Activated CD4-positive, alpha-beta T cell treated with anti-CD3 and anti-CD28 coated beads, Interleukin-2, amount 10 ng/mL, durations not matched to agents 24 days and 14 days (primary cell): ENCODE measurements at regions of chr9 and their contacts with region 1.

Region 1: GRCh38 chr9:72526901-72527800 is 5.7 kb downstream of the TMC1 start:
- DNase-seq: peak; percentile 94
- H3K4me3 Mint-ChIP-seq: peak overlapping the region; percentile 73
- H3K27ac Mint-ChIP-seq: peak overlapping the region; percentile 96
- H3K4me1 Mint-ChIP-seq: peaks cover 56% of the 10 kb centered on the region
- H3K27me3 Mint-ChIP-seq: no peaks in the 10 kb centered on the region

Region 2: DNA sequence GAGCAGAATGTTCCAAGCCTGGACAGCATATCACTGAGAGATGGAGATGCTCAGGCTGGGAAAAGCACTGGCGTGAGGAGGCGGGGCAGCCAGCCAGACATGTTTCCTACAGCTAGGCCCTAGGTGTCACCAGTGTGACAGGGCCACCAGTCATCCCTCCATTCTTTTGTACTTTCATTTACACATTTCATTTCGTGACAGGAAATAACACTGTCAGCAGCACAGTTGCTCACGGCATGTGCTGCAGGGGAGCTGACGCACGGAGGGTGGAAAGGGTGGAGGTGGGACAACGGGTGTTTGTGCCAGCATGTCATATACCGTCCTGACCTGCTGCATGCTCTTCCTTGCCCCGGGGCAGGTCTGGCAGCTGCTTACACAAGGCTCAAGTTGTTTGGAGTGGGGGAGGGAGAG is 744.0 kb before region 1 on chr9:
- intact Hi-C with region 1: loop called (anchors 5 kb)
- DNase-seq: peak; percentile 94
- H3K4me3 Mint-ChIP-seq: peak overlapping the region; percentile 80
- H3K27ac Mint-ChIP-seq: peak overlapping the region; percentile 95
- H3K4me1 Mint-ChIP-seq: peaks cover 43% of the 10 kb centered on the region
- H3K27me3 Mint-ChIP-seq: no peaks in the 10 kb centered on the region

Region 3: DNA sequence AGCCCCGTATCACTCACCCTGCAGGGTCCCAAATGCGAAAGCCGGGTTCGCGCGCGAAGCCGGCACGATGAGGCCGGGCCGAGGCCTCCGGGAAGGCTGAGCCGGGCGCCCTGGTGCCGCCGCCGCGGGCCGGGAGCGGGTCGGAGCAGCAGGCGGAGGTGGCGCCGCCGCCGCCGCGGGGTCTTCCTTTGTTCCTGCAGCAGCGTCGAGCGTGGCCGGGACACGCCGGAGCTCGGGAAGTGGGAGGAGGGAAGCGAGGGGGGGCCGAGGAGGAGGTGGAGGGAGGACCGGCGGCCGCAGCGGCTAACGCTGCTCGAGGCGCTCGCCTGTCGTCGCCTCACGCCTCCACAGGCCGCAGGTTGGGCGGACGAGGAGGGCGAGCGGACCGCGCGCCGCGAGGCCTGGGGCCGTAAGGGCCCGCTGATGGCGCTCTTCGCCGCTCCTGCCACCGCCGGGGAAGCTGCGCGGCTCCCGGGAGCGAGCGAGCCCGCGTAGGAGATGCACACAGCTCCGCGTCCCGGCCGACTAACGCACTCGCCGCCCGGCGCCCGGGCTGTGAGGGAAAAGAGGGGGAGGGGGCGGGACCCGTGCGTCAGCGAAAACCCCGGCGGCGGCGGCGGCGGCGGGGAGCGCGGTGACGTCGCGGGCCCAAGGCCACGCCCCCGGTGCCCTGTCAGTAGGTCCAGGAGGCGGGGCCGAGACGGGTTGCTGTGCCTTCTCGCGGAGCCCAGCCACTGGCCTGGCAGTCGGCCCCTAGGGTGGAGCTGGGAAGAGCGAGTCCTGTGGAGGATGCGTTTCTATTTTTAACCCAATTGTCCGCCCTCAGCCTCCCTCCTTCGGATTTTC is 162.2 kb before region 1 on chr9 and contains the start of gene ZFAND5:
- intact Hi-C with region 1: loop called (anchors 1 kb)
- DNase-seq: peak; percentile 97
- H3K4me3 Mint-ChIP-seq: peak within 1 kb of the TSS; percentile 91
- H3K27ac Mint-ChIP-seq: peak within 1 kb of the TSS; percentile 96
- H3K4me1 Mint-ChIP-seq: peaks cover 32% of the 10 kb centered on the region
- H3K27me3 Mint-ChIP-seq: no peaks in the 10 kb centered on the region
- total RNA-seq, gene ZFAND5: 115 and 121 TPM in 2 replicates

Region 4: DNA sequence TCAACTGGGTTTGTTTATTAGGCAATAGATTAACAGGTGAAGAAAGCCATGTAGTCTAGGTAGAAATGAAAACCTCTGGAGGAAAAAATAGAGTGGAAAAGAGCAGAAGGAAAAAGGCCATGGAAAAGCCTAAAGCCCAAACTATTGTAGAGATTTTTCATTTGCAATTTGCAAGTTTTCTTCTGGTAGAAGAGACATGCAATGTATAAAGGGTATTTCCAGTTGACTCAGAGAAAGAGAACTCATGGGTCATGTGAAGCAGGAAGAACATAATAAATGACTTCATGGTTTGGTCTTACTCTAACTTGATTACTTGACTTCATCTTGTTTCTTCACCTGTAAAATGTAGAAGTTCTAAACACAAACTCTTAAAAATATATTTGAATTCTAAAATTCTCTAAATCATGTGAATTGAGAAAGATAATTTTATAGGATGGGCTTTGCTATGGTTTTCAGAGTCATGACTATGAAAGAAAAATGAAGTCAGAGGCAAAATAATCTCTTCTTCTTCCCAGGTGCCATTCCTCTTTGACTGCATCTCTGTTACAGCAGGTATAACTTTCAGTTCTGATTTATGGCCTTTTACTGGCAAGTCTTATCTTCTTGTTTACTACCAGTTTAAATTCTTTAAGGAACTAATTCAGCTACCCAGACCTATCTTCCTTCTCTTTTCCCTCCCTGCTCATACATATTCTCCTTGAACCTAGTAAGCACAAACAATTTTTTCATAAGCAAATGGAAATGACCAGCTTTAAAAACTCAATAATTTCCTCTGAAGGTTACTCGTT is 53.5 kb before region 1 on chr9:
- intact Hi-C with region 1: loop called (anchors 1 kb)
- DNase-seq: no peak
- H3K4me3 Mint-ChIP-seq: peak overlapping the region; percentile 42
- H3K27ac Mint-ChIP-seq: peak overlapping the region; percentile 83
- H3K4me1 Mint-ChIP-seq: peaks cover 39% of the 10 kb centered on the region
- H3K27me3 Mint-ChIP-seq: no peaks in the 10 kb centered on the region

Region 5: DNA sequence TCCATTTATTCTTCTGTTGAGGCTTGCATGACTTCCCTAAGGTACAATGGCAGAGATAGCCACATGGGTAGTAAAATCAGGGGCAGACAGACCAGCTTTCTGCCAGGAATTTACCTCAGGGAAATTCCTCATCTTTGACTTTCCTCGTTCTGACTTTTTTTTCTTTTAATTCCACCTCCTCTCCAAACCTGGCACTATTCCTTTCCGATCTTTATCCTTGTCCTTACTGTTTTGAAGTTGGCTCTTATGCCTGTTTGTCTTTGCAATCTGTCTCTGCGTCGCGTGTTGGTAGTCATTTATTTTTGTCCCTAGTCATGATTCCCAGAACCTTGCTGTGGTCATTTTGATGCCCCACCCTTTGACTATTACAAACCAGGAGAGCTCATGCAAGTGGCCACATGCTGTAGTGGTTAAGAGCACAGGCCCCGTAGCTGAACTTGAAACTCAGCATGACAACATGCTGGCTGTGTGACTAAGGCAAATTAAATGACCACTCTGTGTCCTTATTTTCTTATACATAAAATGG is 13.3 kb after region 1 on chr9:
- intact Hi-C with region 1: loop called (anchors 1 kb)
- DNase-seq: no peak
- H3K4me3 Mint-ChIP-seq: no peak overlapping the region
- H3K27ac Mint-ChIP-seq: peak overlapping the region; percentile 31
- H3K4me1 Mint-ChIP-seq: peaks cover 42% of the 10 kb centered on the region
- H3K27me3 Mint-ChIP-seq: no peaks in the 10 kb centered on the region

Region 6: DNA sequence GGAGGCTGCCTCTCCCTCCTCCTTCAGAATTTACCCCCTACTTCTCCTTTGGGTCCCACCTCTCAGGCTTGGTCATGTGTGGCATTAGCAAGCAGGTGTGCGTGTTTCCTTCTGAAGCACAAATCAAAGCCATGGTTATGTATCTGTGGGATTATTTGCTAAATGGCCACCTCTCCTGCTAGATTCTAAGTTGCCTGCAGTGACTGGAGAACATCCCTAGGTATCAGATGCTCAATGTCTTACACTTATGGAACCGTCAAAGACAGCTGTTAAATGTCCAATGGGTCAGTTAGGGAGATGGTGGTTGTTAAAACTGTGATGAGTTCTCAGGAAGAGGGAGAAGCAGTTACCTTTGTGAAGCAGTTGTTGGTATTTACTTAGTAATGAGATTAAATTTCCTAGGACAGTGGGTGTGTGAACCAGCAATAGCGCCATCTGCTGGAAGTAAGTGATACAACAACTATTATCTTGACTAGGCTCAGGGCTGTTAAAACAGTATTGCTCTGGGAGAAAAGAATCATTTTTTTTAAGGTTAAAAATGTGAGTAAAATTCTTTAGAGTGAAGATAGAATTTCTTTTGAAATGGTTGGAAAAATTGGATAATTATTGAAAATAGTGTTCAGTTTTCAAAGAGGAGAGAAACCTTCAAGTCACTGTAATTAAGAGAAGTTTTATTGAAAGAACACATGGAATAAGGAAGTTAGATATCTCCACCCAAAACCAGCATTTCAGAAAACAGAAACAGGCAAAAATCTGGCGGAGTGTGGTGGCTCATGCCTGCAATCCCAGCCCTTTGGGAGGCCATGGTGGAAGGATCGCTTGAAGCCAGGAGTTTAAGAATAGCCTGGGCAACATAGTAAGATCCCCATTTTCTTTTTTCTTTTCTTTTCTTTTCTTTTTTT is 65.6 kb after region 1 on chr9:
- intact Hi-C with region 1: loop called (anchors 1 kb)
- DNase-seq: peak; percentile 79
- H3K4me3 Mint-ChIP-seq: no peak overlapping the region
- H3K27ac Mint-ChIP-seq: no peak overlapping the region
- H3K4me1 Mint-ChIP-seq: peaks cover 45% of the 10 kb centered on the region
- H3K27me3 Mint-ChIP-seq: peaks cover 8% of the 10 kb centered on the region

Region 7: DNA sequence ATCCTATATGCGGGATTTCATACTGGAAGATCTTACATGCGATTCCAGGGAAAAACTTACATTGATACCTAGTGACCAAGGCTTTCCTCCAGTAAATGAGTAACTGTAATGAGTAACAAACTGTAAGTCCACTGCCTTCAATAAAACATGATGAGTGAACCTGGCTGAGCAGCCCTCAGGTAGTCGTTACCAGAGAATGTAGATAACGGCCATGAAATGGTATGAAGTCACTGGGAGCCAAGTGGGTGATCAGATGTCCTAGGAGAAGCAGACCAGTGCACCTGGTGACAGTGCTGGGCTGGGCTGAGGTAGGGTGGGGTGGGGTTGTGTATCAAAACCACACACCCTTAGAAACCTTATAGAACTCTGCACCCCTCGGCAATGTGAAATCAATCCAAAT is 222.1 kb after region 1 on chr9:
- intact Hi-C with region 1: no loop called
- DNase-seq: no peak
- H3K4me3 Mint-ChIP-seq: no peak overlapping the region
- H3K27ac Mint-ChIP-seq: no peak overlapping the region
- H3K4me1 Mint-ChIP-seq: no peaks in the 10 kb centered on the region
- H3K27me3 Mint-ChIP-seq: peaks cover 7% of the 10 kb centered on the region

Region 8: GRCh38 chr9:73154760-73155159 is 627.6 kb after region 1 on chr9:
- intact Hi-C with region 1: loop called (anchors 5 kb)
- DNase-seq: peak; percentile 79
- H3K4me3 Mint-ChIP-seq: peak overlapping the region; percentile 83
- H3K27ac Mint-ChIP-seq: peak overlapping the region; percentile 86
- H3K4me1 Mint-ChIP-seq: peaks cover 61% of the 10 kb centered on the region
- H3K27me3 Mint-ChIP-seq: no peaks in the 10 kb centered on the region